ENCODE measurements at regions of chr6 and their contacts with region 1.

Region 1: GRCh38 chr6:99330159-99330558 is 19.3 kb downstream of the FAXC start:
- DNase-seq: peak; percentile 64
- H3K4me3 Mint-ChIP-seq: no peak overlapping the region
- H3K27ac Mint-ChIP-seq: no peak overlapping the region
- H3K4me1 Mint-ChIP-seq: peaks cover 10% of the 10 kb centered on the region
- H3K27me3 Mint-ChIP-seq: peaks cover 8% of the 10 kb centered on the region

Region 2: DNA sequence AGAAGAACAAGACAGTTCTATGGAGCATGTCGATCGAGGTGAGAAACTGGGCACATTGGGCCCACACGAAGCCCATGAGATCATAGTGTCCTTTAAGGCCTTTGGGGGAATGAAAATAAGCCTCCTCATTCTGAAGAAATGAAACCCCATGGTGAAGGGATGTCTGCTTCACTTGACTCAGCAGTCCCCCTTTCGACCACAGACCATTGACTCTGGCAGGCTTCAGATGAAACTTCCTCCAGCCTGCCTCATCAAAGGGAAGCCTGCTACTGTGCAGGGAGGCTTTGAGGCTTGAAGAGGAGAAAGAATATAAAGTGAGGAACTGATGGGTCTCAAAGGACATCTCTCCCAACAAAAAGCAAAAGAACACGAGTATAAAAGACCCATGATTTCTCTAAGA is 238.2 kb before region 1 on chr6:
- CTCF ChIA-PET with region 1: no interaction called
- POLR2A ChIA-PET with region 1: no interaction called
- DNase-seq: no peak
- H3K4me3 Mint-ChIP-seq: no peak overlapping the region
- H3K27ac Mint-ChIP-seq: no peak overlapping the region
- H3K4me1 Mint-ChIP-seq: peaks cover 5% of the 10 kb centered on the region
- H3K27me3 Mint-ChIP-seq: peaks cover 19% of the 10 kb centered on the region

Region 3: GRCh38 chr6:99241905-99242534 is 88.1 kb before region 1 on chr6:
- CTCF ChIA-PET with region 1: no interaction called
- POLR2A ChIA-PET with region 1: no interaction called
- DNase-seq: no peak
- H3K4me3 Mint-ChIP-seq: no peak overlapping the region
- H3K27ac Mint-ChIP-seq: no peak overlapping the region
- H3K4me1 Mint-ChIP-seq: no peaks in the 10 kb centered on the region
- H3K27me3 Mint-ChIP-seq: peaks cover 2% of the 10 kb centered on the region

Region 4: GRCh38 chr6:99318542-99318941 is 11.6 kb before region 1 on chr6:
- CTCF ChIA-PET with region 1: interaction called, 10 read pairs
- POLR2A ChIA-PET with region 1: no interaction called
- DNase-seq: no peak
- H3K4me3 Mint-ChIP-seq: no peak overlapping the region
- H3K27ac Mint-ChIP-seq: no peak overlapping the region
- H3K4me1 Mint-ChIP-seq: no peaks in the 10 kb centered on the region
- H3K27me3 Mint-ChIP-seq: peaks cover 33% of the 10 kb centered on the region

Region 5: GRCh38 chr6:99344289-99344688 is 14.1 kb after region 1 on chr6:
- CTCF ChIA-PET with region 1: interaction called, 23 read pairs
- POLR2A ChIA-PET with region 1: interaction called, 3 read pairs
- DNase-seq: no peak
- H3K4me3 Mint-ChIP-seq: no peak overlapping the region
- H3K27ac Mint-ChIP-seq: no peak overlapping the region
- H3K4me1 Mint-ChIP-seq: peaks cover 9% of the 10 kb centered on the region
- H3K27me3 Mint-ChIP-seq: peaks cover 57% of the 10 kb centered on the region

Region 6: DNA sequence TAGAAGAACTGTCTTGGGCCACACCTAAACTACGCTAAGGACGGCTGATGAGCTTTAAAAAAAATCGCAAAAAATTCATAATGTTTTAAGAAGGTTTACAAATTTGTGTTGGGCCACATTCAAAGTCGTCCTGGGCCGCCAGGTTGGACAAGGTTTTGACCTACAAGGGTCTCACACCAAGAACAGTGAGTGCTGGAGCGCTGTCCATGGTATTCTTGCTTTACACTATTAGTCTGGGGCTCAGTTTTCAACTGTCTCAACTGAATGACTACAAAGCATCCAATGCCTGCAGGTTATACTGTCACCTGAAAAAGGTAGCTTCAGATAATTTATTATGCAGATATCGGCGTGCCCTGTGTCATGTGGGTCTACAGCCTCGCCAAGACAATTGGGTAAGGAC is 23.0 kb after region 1 on chr6:
- CTCF ChIA-PET with region 1: interaction called, 15 read pairs
- POLR2A ChIA-PET with region 1: no interaction called
- DNase-seq: no peak
- H3K4me3 Mint-ChIP-seq: no peak overlapping the region
- H3K27ac Mint-ChIP-seq: no peak overlapping the region
- H3K4me1 Mint-ChIP-seq: peaks cover 5% of the 10 kb centered on the region
- H3K27me3 Mint-ChIP-seq: peaks cover 64% of the 10 kb centered on the region

Region 7: DNA sequence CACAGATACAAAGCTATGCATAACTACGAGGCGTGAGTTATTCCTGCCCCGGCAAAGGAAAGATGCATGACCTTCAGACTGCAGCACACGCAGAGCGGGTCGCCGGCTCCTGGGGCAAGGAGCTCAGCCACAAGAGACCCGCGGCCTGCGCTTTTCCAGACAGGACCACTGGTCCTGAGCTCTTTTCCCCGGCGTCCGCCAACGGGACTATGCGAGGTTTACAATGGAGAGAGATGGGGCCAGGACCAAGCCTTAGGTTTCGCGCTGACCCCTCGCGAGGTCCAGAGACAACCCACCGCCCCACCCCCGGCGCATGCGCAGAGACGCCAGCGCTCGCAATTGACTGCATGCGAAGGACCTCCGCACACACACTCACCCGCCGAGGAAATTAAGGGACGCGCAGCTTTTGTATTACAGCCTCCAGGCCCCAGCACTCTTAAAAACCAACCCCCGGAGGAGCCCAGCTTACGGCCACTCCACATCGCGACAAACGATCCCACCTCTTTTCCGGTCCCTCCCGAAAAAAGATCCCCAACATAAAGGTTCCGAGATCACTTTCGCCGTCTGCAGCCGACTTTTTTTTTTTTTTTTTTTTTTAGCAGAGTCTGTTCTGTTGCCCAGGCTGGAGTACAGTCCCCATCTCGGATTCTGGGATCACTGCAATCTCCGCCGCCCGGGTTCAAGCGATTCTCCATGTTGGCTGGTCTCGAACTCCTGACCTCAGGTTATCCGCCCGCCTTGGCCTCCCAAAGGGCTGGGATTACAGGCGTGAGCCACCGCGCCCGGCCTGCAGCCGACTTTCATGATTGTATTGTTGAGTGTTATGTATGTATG is 63.8 kb after region 1 on chr6 and contains the start of gene COQ3:
- CTCF ChIA-PET with region 1: interaction called, 21 read pairs
- POLR2A ChIA-PET with region 1: no interaction called
- DNase-seq: peak; percentile 71
- H3K4me3 Mint-ChIP-seq: peak within 1 kb of the TSS; percentile 91
- H3K27ac Mint-ChIP-seq: peak within 1 kb of the TSS; percentile 69
- H3K4me1 Mint-ChIP-seq: peaks cover 16% of the 10 kb centered on the region
- H3K27me3 Mint-ChIP-seq: no peaks in the 10 kb centered on the region
- total RNA-seq, gene COQ3: 6.6 to 7.5 TPM

Region 8: DNA sequence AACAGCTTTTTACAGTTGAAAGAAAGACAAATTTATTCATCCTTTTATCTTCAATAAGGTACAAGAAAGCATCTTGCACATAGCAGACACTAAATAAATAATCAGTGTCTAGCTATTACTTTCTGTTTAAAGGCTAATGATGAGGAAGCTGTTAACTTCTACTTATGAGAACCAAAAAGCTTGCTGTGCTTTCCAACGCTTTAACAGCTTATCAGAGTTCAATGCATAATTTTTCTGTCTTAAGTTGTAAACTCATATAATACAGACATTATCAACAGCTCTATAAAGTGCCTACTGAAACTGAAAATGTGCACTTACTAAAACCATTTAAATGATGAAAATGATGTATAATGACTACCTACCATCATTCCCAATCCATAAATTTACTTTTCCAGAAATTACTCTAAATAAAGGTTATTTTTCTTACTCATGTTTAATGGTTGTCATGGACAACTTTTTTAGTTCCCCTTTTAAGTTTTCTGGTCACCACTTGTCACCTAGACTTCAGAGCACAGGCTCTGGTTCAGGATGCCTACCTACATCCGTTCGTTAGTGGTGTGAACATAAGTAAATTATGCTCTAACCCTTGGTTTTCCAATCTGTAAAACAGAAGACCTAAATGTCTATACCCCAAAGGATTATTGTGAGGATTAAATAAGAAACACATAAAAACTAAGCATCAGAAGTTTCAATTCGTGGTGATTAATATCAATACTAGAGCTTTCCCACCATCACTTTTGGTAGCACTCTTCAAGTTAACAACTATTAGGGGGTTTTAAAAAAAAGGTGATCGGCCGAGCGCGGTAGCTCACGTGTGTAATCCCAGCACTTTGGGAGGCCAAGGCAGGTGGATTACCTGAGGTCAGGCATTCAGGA is 87.0 kb after region 1 on chr6:
- CTCF ChIA-PET with region 1: interaction called, 10 read pairs
- POLR2A ChIA-PET with region 1: no interaction called
- DNase-seq: no peak
- H3K4me3 Mint-ChIP-seq: no peak overlapping the region
- H3K27ac Mint-ChIP-seq: no peak overlapping the region
- H3K4me1 Mint-ChIP-seq: peaks cover 40% of the 10 kb centered on the region
- H3K27me3 Mint-ChIP-seq: no peaks in the 10 kb centered on the region

Region 9: DNA sequence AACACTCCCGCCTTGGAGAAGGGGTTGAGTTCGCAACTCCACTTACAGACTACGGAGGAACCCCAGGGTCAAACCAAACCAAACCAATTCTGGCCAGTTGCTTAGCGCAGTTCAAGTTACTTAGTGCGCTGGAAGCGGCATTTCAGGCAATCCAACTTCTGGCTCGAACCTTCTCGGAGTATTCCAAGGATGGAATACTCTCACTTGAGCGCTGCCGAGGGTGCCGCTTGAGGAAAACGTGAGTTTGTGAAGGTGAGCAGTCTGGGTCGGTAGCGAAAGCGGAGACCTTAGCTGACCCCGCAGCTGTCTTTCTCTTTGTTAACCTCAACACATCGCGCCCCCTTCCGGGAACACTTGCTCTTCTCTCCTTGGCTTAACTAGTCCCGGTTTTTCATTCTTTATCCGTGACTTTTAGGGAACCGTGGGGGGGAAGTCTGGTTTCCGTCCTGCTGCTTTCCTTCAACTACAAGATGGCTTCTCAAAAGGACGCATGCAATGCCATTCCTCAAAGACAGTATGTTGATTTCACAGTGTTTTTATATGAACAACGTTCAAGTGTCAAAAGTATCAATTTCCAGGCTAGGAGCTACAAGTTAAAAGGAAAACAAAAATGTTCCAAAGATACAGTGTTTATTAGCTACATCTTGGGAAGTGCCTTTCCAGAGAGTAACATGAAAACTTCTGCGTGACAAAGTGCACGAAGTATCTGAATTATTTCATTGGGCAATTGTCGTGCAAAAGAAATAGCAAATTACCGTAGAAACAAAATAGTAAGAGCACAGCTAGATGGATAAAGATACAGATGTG is 95.7 kb after region 1 on chr6:
- CTCF ChIA-PET with region 1: interaction called, 15 read pairs
- POLR2A ChIA-PET with region 1: interaction called, 6 read pairs
- DNase-seq: peak; percentile 66
- H3K4me3 Mint-ChIP-seq: peak overlapping the region; percentile 87
- H3K27ac Mint-ChIP-seq: peak overlapping the region; percentile 99
- H3K4me1 Mint-ChIP-seq: peaks cover 56% of the 10 kb centered on the region
- H3K27me3 Mint-ChIP-seq: no peaks in the 10 kb centered on the region

Measured in activated CD4-positive, alpha-beta memory T cell treated with anti-CD3 and anti-CD28 coated beads, Interleukin-2, amount 10 ng/mL, durations not matched to agents 7 days and 5 days (primary cell).